CD4-positive, alpha-beta T cell (primary cell): ENCODE measurements at regions of chr9 and their contacts with region 1.

Region 1: DNA sequence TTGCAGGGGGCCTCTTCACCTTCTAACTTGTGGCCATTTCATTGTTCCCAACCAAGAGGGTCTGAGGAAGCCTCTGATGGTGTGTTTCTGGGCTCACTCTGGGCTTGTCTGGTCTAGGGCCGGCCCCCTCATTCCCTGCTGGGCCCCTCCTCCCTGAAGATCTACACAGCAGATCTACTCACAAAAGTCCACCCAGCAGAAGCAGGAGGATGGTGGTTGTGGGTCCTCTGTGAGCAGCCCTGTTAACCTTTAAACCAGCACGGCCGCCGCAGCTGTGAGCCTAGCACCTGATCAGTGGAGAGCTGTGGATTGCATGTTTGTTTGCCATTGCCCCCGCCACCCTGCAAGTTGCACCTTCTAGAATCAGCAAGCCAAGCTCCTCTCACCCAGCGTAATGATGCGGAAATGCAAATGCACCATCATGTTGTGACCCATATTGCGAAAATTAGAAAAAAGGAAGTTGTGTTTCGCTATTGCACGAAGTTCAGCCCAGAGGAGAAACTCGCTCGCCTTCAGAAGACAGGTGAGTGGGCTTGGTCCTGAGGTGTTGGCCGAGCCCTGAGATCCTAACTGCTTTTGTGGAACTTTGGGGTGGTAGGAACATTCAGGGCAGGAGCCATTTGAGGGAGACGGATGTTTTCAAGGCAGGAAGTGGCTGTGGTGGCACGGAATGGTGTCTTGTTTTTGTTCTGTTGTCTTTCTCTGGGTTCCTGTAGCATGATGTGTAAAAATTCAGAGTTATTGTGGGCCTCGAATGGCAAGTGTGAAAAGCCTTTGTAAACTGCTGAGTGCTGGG is 16.7 kb downstream of the FGD3 start:
- DNase-seq: peak; percentile 63 to 91 (median 78)
- ATAC-seq: peak; percentile 74
- H3K4me3 ChIP-seq: peak overlapping the region; percentile 69
- H3K4me3 Mint-ChIP-seq: peak overlapping the region; percentile 94
- H3K27ac ChIP-seq: peak overlapping the region; percentile 90 to 95
- H3K27ac Mint-ChIP-seq: peak overlapping the region; percentile 99
- H3K4me1 ChIP-seq: peaks cover 84% of the 10 kb centered on the region
- H3K4me1 Mint-ChIP-seq: peaks cover 73% of the 10 kb centered on the region
- H3K27me3 ChIP-seq: no peaks in the 10 kb centered on the region
- H3K27me3 Mint-ChIP-seq: no peaks in the 10 kb centered on the region
- CTCF ChIP-seq: no peak

Region 2: DNA sequence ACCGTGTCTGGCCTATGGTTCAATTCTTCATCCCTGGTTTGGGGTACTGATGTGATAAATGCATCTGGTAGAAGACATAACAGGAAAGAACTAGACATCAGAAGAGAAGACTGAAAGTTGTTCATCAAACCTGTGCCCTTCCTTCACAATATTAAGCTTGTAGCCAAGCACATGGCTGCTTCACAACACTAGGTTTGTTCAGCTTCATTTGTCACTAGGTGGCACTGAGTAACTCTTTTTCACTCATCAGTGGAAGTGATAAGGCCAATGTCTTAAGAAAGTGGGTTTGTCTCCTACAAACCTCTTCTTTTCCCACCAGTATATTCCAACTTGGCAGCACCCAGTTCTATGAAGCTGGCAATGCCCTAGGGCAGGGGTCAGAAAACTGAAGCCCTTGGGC is 113.1 kb before region 1 on chr9:
- CTCF ChIA-PET with region 1: no interaction called
- POLR2A ChIA-PET with region 1: interaction called, 14 read pairs
- intact Hi-C with region 1: no loop called
- DNase-seq: peak in 4 of 14 experiments; percentile 6 to 50 (median 38)
- ATAC-seq: peak; percentile 64
- H3K4me3 ChIP-seq: no peak overlapping the region
- H3K4me3 Mint-ChIP-seq: no peak overlapping the region
- H3K27ac ChIP-seq: no peak overlapping the region
- H3K27ac Mint-ChIP-seq: peak overlapping the region; percentile 19
- H3K4me1 ChIP-seq: peaks cover 3% of the 10 kb centered on the region
- H3K4me1 Mint-ChIP-seq: peaks cover 17% of the 10 kb centered on the region
- H3K27me3 ChIP-seq: no peaks in the 10 kb centered on the region
- H3K27me3 Mint-ChIP-seq: no peaks in the 10 kb centered on the region
- CTCF ChIP-seq: peak; percentile 57

Region 3: GRCh38 chr9:92947268-92948047 is 16.6 kb before region 1 on chr9 and contains the start of gene FGD3:
- CTCF ChIA-PET with region 1: interaction called, 6 read pairs
- POLR2A ChIA-PET with region 1: interaction called, 161 read pairs
- intact Hi-C with region 1: no loop called
- DNase-seq: peak in 9 of 14 experiments; percentile 22 to 68 (median 54)
- ATAC-seq: peak; percentile 78
- H3K4me3 ChIP-seq: peak within 1 kb of the TSS; percentile 81
- H3K4me3 Mint-ChIP-seq: peak within 1 kb of the TSS; percentile 99
- H3K27ac ChIP-seq: peak within 1 kb of the TSS; percentile 53 to 61
- H3K27ac Mint-ChIP-seq: peak within 1 kb of the TSS; percentile 98
- H3K4me1 ChIP-seq: peaks cover 72% of the 10 kb centered on the region
- H3K4me1 Mint-ChIP-seq: peaks cover 70% of the 10 kb centered on the region
- H3K27me3 ChIP-seq: no peaks in the 10 kb centered on the region
- H3K27me3 Mint-ChIP-seq: no peaks in the 10 kb centered on the region
- CTCF ChIP-seq: no peak
- total RNA-seq, gene FGD3: 91.0 to 95.7 TPM

Region 4: DNA sequence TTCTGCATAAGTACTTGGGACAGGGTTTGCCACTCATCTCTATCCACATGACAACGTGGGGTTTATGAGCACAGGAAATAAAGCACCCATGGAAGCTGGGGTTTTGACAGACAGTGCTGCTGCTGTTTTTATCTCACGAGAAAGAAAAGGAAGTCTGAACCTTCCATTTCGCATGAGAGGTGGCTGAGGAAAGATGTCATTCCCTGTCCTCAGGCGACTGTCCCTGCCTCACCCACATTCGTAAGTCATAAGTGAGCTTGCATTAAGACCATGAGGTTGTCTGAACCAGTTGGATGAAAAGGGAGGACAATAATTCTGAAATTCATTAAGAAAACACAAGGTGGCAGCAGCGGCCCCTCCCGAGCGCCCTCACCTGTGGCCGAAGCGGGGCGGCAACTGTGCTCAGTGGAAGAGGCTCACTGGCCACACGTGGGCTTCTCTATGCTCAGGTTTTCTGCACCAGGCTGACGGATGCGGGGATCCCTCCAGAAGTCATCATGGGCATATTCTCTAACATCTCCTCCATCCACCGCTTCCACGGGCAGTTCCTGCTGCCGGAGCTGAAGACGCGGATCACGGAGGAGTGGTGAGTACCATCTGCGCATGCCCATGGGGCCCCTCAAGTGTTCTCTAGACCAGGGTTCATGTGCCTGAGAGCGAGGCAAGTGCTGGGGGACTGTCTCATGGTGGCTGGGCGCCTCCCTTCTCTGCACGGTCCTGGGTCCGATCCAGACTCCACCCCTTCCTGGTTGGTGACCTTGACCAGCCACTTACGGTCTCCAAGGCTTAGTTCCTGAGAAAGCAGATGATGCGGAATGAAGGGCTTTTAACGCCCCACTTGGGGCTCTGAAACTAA is 39.8 kb after region 1 on chr9:
- CTCF ChIA-PET with region 1: interaction called, 5 read pairs
- POLR2A ChIA-PET with region 1: interaction called, 47 read pairs
- intact Hi-C with region 1: loop called (anchors 2 to 5 kb)
- DNase-seq: peak; percentile 47 to 85 (median 56)
- ATAC-seq: peak; percentile 77
- H3K4me3 ChIP-seq: no peak overlapping the region
- H3K4me3 Mint-ChIP-seq: peak overlapping the region; percentile 71
- H3K27ac ChIP-seq: peak overlapping the region; percentile 7 to 63
- H3K27ac Mint-ChIP-seq: peak overlapping the region; percentile 88
- H3K4me1 ChIP-seq: peaks cover 48% of the 10 kb centered on the region
- H3K4me1 Mint-ChIP-seq: peaks cover 65% of the 10 kb centered on the region
- H3K27me3 ChIP-seq: no peaks in the 10 kb centered on the region
- H3K27me3 Mint-ChIP-seq: no peaks in the 10 kb centered on the region
- CTCF ChIP-seq: peak; percentile 79

Region 5: DNA sequence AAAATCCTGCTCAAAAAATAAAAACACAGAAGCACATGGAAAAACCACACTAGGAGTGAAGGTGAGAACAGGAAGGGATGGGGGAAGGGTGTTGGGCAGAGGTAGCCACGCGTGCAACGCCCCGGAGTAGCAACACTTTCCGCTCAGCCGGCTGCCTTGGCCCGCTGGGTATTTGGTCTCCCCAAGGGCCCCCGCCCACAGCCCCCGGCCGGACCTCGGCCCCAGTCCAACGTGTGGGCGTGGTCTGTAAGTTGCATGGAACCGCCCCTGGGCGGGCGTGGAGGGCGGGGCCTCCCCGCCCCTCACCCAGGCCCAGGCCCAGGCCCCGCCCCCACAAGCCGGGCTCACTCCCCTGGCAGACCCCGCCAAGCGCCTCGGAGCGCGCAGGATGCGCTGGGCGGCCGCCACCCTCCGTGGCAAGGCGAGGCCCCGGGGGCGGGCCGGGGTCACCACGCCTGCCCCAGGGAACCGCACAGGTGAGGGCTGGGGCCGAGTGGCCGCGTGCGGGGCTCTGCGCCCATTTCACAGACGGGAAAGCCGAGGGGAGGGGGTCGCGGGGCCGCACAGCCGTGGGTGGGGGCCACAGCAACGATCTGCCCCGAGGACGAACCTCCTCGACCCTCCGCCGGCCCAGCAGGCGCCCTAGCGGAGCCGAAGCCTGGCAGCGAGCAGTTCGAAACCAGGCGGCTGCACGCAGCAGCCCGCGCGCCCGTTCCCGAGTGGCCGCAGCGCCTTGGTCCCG is 94.5 kb after region 1 on chr9 and contains the start of gene SUSD3:
- CTCF ChIA-PET with region 1: interaction called, 4 read pairs
- POLR2A ChIA-PET with region 1: interaction called, 84 read pairs
- intact Hi-C with region 1: loop called (anchors 5 kb)
- DNase-seq: peak; percentile 46 to 86 (median 69)
- ATAC-seq: peak; percentile 62
- H3K4me3 ChIP-seq: peak within 1 kb of the TSS; percentile 91
- H3K4me3 Mint-ChIP-seq: peak within 1 kb of the TSS; percentile 96
- H3K27ac ChIP-seq: peak within 1 kb of the TSS; percentile 83 to 90
- H3K27ac Mint-ChIP-seq: peak within 1 kb of the TSS; percentile 100
- H3K4me1 ChIP-seq: peaks cover 74% of the 10 kb centered on the region
- H3K4me1 Mint-ChIP-seq: peaks cover 74% of the 10 kb centered on the region
- H3K27me3 ChIP-seq: no peaks in the 10 kb centered on the region
- H3K27me3 Mint-ChIP-seq: no peaks in the 10 kb centered on the region
- CTCF ChIP-seq: no peak
- total RNA-seq, gene SUSD3: 33.9 to 35.6 TPM

Region 6: DNA sequence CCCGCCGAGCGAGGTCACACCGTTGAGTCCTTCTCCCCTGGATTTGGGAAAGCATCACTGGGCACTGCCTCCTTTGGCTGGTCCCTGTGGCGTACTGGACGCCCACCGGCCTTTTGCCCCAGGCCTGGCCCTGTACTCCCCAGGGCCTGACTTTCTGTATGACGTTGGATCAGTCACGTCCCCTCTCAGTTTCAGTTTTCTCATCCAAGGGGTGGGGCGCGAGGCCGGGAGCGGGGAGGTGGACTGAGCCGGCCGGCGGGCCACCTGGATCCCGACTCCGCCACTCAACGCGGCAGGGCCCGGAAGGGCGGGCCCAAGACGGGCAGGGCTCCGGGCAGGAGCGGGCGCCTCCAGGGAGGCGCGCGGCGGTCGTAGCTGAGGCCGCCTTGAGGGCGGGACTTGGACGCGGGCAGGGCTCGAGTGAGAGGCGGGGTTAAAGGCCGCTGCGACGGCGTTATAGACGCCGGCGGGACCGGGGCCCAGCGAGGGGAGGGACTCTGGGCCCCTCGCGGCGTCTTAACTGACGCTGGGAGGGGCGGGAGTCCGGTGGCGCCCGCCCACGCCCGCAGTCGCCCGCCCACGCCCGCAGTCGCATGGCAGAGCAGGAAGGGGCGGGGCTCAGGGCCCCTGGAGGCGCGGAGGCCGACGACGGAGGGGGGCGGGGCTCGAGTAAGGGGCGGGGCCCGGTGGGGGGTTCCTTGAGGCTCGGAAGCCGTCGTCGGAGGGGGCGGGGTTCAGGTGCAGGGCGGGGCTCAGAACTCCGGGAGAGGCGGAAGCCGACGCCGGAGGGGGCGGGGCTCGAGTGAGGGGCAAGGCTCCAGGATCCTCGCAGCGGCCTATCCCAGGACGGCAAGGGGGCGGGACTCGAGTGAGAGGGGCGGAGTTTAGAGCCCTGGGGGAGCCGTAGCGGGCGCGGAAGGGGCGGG is 131.4 kb after region 1 on chr9:
- CTCF ChIA-PET with region 1: no interaction called
- POLR2A ChIA-PET with region 1: interaction called, 35 read pairs
- intact Hi-C with region 1: loop called in 1 of 2 experiments (anchors 5 kb)
- DNase-seq: peak; percentile 100
- ATAC-seq: peak; percentile 81
- H3K4me3 ChIP-seq: peak overlapping the region; percentile 62
- H3K4me3 Mint-ChIP-seq: peak overlapping the region; percentile 95
- H3K27ac ChIP-seq: peak overlapping the region; percentile 94 to 95
- H3K27ac Mint-ChIP-seq: peak overlapping the region; percentile 99
- H3K4me1 ChIP-seq: peaks cover 75% of the 10 kb centered on the region
- H3K4me1 Mint-ChIP-seq: peaks cover 78% of the 10 kb centered on the region
- H3K27me3 ChIP-seq: no peaks in the 10 kb centered on the region
- H3K27me3 Mint-ChIP-seq: no peaks in the 10 kb centered on the region
- CTCF ChIP-seq: no peak

Region 7: GRCh38 chr9:93566408-93567270 is 602.6 kb after region 1 on chr9:
- CTCF ChIA-PET with region 1: no interaction called
- POLR2A ChIA-PET with region 1: interaction called, 3 read pairs
- intact Hi-C with region 1: loop called in 1 of 2 experiments (anchors 5 kb)
- DNase-seq: peak; percentile 95 to 99 (median 99)
- ATAC-seq: peak; percentile 97
- H3K4me3 ChIP-seq: peak overlapping the region; percentile 70
- H3K4me3 Mint-ChIP-seq: peak overlapping the region; percentile 88
- H3K27ac ChIP-seq: peak overlapping the region; percentile 89 to 92
- H3K27ac Mint-ChIP-seq: peak overlapping the region; percentile 90
- H3K4me1 ChIP-seq: peaks cover 19% of the 10 kb centered on the region
- H3K4me1 Mint-ChIP-seq: peaks cover 10% of the 10 kb centered on the region
- H3K27me3 ChIP-seq: no peaks in the 10 kb centered on the region
- H3K27me3 Mint-ChIP-seq: no peaks in the 10 kb centered on the region
- CTCF ChIP-seq: peak; percentile 91